Naive thymus-derived CD4-positive, alpha-beta T cell (primary cell): ENCODE measurements at regions of chr3 and their contacts with region 1.

Region 1: DNA sequence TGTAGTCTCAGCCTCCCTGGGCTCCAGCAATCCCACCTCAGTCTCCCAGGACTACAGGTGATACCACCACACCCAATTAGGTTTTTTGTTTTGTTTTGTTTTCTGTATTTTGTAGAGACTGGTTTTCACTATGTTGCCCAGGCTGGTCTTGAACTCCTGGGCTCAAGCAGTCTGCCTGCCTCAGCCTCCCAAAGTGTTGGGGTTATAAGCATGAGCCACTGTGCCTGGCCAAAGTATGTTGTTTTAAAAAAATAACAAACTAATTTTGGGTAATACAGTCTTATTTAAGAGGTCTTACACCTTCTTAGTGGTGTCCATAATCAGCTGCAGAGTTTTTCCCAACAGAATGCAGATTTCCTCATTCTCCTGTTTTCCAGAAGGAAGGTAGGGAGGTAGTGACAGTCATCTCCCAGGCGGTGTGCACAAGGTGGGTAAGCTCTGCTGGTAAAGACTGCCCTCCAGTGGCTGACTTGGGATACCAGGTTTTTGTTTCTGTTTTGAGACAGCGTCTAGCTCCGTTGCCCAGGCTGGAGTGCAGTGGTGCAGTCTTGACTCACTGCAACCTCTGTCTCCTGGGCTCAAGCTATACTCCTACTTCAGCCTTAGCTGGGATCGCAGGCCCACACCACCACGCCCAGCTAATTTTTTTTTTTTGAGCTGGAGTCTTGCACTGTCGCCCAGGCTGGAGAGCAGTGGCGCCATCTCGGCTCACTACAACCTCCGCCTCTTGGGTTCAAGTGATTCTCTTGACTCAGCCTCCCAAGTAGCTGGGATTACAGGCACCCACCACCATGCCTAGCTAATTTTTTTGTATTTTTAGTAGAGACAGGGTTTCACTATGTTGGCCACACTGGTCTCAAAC is 58.4 kb downstream of the MAP6D1 start:
- DNase-seq: peak; percentile 41 to 72 (median 65)
- ATAC-seq: peak; percentile 96
- H3K4me3 ChIP-seq: no peak overlapping the region
- H3K4me3 Mint-ChIP-seq: no peak overlapping the region
- H3K27ac ChIP-seq: no peak overlapping the region
- H3K27ac Mint-ChIP-seq: peak overlapping the region in 4 of 9 donors; percentile 3 to 73 (median 40)
- H3K4me1 ChIP-seq: no peaks in the 10 kb centered on the region
- H3K4me1 Mint-ChIP-seq: peaks cover 5 to 18% (median 12%) of the 10 kb centered on the region in 7 donors
- H3K27me3 ChIP-seq: no peaks in the 10 kb centered on the region
- H3K27me3 Mint-ChIP-seq: no peaks in the 10 kb centered on the region

Region 2: DNA sequence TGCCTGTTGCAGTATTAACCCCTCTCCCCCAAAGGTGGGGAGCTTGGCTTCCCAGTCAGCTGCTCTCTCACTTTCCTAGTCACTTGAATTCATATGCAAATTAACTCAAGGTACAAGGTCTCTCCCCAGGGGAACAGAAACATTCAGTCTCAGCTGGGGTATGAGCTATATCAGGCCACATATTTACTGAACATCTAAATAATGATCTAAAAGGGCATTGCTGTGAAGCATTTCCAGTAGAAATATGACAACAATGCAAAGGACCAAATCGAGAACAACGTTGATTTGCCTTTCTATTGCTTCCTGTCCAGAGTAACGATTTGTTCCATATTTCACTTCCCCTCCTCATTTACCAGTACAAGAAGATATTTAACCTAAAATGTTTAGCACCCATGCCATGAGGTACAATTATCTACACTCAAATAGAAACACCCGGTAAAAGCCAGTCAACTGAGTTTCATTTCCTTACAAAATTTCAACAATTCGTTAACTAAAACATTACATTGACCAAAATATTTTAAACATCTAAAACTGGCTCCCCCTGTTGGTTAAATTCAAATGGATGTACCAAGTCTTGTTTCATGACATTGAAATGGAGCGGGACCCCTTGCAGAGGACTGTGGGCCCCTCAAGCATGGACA is 175.0 kb before region 1 on chr3:
- CTCF ChIA-PET with region 1: no interaction called
- POLR2A ChIA-PET with region 1: no interaction called
- intact Hi-C with region 1: loop called in 1 of 2 experiments (anchors 2 kb)
- DNase-seq: peak in 6 of 9 donors; percentile 11 to 48 (median 40)
- ATAC-seq: peak; percentile 44
- H3K4me3 ChIP-seq: no peak overlapping the region
- H3K4me3 Mint-ChIP-seq: peak overlapping the region in 9 of 10 donors; percentile 37 to 86 (median 70)
- H3K27ac ChIP-seq: no peak overlapping the region
- H3K27ac Mint-ChIP-seq: peak overlapping the region in 8 of 9 donors; percentile 39 to 93 (median 62)
- H3K4me1 ChIP-seq: peaks cover 6 to 39% of the 10 kb centered on the region in 2 donors
- H3K4me1 Mint-ChIP-seq: peaks cover 24 to 53% (median 44%) of the 10 kb centered on the region in 7 donors
- H3K27me3 ChIP-seq: no peaks in the 10 kb centered on the region
- H3K27me3 Mint-ChIP-seq: peaks cover 0 to 2% (median 0%) of the 10 kb centered on the region in 5 donors

Region 3: GRCh38 chr3:184005941-184006507 is 239.0 kb after region 1 on chr3:
- CTCF ChIA-PET with region 1: no interaction called
- POLR2A ChIA-PET with region 1: no interaction called
- intact Hi-C with region 1: no loop called
- DNase-seq: peak in 5 of 9 donors; percentile 18 to 52 (median 44)
- ATAC-seq: peak; percentile 58
- H3K4me3 ChIP-seq: no peak overlapping the region
- H3K4me3 Mint-ChIP-seq: peak overlapping the region in 2 of 10 donors; percentile 28 to 48
- H3K27ac ChIP-seq: no peak overlapping the region
- H3K27ac Mint-ChIP-seq: peak overlapping the region in 1 of 9 donors; percentile 48
- H3K4me1 ChIP-seq: no peaks in the 10 kb centered on the region
- H3K4me1 Mint-ChIP-seq: peaks cover 10 to 12% (median 11%) of the 10 kb centered on the region in 7 donors
- H3K27me3 ChIP-seq: no peaks in the 10 kb centered on the region
- H3K27me3 Mint-ChIP-seq: no peaks in the 10 kb centered on the region